ENCODE measurements at regions of chr19 and their contacts with region 1.

Region 1: GRCh38 chr19:51338563-51339312 is 3.2 kb downstream of the VSIG10L start:
- DNase-seq: peak; percentile 95
- H3K4me3 Mint-ChIP-seq: peak overlapping the region; percentile 90
- H3K27ac Mint-ChIP-seq: peak overlapping the region; percentile 87
- H3K4me1 Mint-ChIP-seq: peaks cover 20% of the 10 kb centered on the region
- H3K27me3 Mint-ChIP-seq: peaks cover 6% of the 10 kb centered on the region

Region 2: DNA sequence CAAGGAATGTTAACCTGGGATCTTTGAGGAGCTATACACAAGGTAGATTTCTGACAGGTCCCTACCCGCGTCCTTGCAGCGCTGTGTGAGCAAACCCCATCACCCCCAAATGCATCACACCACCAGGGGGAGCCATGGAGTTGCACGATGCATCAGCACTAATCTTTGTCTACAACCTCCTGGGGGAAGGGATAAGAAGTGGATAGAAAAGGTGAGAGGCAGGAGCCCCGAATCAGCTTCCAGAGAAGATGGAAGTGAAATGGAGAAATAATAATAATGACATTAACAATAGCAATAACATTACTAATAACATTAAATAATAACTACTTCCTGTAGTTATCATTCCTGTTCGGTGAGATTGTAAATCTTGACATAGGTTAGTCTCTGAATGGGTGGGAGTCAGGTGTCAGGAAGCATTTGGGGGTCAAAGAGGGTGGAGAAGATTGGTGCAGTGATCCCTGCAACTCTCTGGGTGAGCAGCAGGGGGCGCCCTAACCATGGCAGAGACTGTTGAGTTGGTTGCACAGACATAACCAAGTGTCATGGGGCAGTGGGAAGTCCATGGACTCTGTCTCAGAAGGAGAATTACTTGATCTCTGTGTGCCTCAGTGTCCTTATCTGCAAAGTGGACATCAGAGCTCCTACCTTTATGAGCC is 180.1 kb before region 1 on chr19:
- intact Hi-C with region 1: no loop called
- DNase-seq: peak; percentile 94
- H3K4me3 Mint-ChIP-seq: no peak overlapping the region
- H3K27ac Mint-ChIP-seq: peak overlapping the region; percentile 56
- H3K4me1 Mint-ChIP-seq: peaks cover 13% of the 10 kb centered on the region
- H3K27me3 Mint-ChIP-seq: peaks cover 13% of the 10 kb centered on the region

Region 3: DNA sequence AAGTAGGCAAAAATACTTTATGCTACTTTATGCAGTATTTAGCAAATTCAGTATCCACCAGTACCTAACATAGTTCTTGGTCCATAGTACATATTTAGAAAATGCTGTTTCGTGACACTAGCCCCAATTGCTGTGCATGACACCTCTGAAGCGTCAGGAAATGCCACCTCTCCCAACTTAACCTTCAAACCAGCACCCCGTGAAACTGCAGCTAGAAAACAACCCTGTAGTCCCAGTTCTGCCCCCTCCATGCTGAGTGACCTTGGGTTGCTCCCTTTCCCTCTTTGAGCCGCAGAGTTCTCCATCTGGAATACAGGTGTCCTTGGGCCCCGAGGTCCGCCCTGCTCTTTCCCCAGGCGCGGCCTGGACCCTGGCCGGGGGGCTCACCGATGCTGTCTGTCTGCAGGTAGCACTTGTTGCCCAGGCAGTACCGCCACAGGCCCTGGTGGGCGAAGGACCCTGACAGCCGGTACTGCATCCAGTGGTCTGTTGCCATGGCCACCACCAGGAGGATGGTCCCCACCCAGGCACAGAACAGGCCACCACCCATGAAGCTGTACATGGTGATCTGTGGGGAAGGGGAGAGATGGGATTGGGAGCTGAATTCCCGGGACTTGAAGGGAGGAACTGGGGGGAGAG is 48.3 kb after region 1 on chr19:
- intact Hi-C with region 1: no loop called
- DNase-seq: no peak
- H3K4me3 Mint-ChIP-seq: no peak overlapping the region
- H3K27ac Mint-ChIP-seq: no peak overlapping the region
- H3K4me1 Mint-ChIP-seq: peaks cover 19% of the 10 kb centered on the region
- H3K27me3 Mint-ChIP-seq: no peaks in the 10 kb centered on the region

Region 4: GRCh38 chr19:51407511-51408131 is 68.9 kb after region 1 on chr19:
- intact Hi-C with region 1: loop called (anchors 1 kb)
- DNase-seq: peak; percentile 79
- H3K4me3 Mint-ChIP-seq: no peak overlapping the region
- H3K27ac Mint-ChIP-seq: no peak overlapping the region
- H3K4me1 Mint-ChIP-seq: peaks cover 7% of the 10 kb centered on the region
- H3K27me3 Mint-ChIP-seq: no peaks in the 10 kb centered on the region

Region 5: DNA sequence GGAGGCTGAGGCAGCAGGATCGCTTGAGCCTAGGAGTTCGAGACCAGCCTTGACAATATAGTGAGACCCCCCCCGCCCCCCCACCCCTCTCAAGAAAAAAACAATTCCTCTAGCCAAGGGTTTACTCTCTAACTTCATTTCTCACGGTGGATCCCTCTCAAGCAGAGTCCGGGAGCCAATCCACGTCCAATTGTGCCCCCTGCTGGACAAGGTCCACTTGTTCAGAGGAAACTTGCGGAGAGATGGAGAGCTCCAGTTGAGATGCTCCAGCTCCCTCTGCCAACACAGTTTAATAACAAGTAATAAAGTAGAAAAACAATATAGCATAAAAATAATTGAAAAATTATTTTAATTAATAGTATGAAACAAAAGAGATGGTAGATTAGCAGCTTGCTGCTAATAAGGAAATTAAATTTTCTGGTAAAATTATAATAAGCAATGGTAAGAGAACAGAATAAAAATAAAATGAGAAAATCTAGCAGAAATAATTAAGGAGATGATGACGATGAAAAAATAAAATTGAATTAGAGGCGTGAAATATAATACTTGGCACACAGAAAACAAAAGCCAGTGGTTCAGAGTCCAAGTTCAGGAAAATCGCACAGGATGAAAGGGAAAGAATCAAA is 322.4 kb after region 1 on chr19:
- intact Hi-C with region 1: loop called (anchors 2 kb)
- DNase-seq: peak; percentile 84
- H3K4me3 Mint-ChIP-seq: no peak overlapping the region
- H3K27ac Mint-ChIP-seq: no peak overlapping the region
- H3K4me1 Mint-ChIP-seq: peaks cover 5% of the 10 kb centered on the region
- H3K27me3 Mint-ChIP-seq: peaks cover 23% of the 10 kb centered on the region

Measured in activated CD4-positive, alpha-beta T cell treated with anti-CD3 and anti-CD28 coated beads, Interleukin-2, amount 10 ng/mL, durations not matched to agents 24 days and 14 days (primary cell).